ENCODE measurements at regions of chr4 and their contacts with region 1.

Region 1: DNA sequence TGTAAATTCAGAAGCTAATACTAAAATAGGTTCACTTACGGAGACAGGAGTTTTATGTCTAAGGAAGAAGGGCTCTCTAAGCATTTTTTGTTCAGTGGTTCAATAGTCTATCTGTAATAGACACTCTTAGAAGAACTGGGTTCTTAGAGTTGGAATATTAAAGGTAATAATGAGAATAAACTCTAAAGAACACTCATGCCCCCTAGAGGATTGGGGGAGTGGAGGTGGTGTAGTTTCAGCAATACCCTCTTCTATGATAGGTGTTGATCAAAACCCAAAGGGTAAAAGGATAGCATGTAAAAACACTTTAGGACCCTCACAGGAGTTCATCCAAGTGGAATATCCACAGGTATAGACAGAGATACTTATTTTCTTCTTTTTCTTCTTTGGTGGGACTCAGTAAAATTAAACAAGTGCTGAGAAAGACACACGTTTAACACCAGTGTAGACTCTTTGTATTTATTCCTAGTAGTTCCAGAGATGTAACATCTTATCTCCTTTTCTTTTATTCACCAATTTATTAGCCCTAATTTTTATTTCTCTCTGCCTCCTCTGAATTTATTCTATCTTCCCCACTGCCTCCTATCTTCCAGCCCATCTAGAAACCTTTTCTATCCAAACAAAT is 25.7 kb upstream of the MND1 start:
- DNase-seq: peak; percentile 29
- H3K4me3 Mint-ChIP-seq: no peak overlapping the region
- H3K27ac Mint-ChIP-seq: peak overlapping the region; percentile 58
- H3K4me1 Mint-ChIP-seq: no peaks in the 10 kb centered on the region
- H3K27me3 Mint-ChIP-seq: no peaks in the 10 kb centered on the region
- CTCF ChIP-seq: peak; percentile 25

Region 2: DNA sequence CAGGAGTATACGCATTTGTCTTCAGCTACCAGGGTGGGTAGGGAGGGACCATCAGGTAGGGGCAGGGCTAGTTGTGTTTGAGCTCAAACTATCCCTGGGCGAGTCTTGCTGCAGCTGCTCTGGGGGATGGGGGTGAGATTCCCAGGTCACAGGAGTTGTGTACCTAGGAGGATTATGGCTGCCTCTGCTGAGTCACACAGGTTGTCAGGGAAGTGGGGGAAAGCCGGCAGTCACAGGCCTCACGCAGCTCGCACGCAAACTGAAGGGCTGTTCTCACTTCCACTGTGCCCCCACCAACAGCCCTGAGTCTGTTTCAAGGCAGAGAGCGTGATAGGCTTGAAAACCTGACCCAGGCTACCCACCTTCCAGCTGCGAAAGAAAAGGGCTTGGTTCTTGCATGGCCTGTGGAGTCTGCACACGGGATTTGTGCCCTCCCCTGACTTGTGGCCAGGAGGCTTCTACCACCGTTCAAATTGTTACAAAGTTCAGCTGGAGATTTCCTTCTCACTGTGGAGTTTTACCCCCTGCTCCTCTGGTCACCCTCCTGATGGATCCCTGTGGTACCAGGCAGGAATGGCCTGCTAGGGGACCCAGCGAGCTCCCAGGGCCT is 475.2 kb before region 1 on chr4:
- CTCF ChIA-PET with region 1: no interaction called
- intact Hi-C with region 1: loop called (anchors 10 kb)
- DNase-seq: peak; percentile 65
- H3K4me3 Mint-ChIP-seq: peak overlapping the region; percentile 34
- H3K27ac Mint-ChIP-seq: peak overlapping the region; percentile 70
- H3K4me1 Mint-ChIP-seq: peaks cover 25% of the 10 kb centered on the region
- H3K27me3 Mint-ChIP-seq: no peaks in the 10 kb centered on the region
- CTCF ChIP-seq: no peak

Region 3: DNA sequence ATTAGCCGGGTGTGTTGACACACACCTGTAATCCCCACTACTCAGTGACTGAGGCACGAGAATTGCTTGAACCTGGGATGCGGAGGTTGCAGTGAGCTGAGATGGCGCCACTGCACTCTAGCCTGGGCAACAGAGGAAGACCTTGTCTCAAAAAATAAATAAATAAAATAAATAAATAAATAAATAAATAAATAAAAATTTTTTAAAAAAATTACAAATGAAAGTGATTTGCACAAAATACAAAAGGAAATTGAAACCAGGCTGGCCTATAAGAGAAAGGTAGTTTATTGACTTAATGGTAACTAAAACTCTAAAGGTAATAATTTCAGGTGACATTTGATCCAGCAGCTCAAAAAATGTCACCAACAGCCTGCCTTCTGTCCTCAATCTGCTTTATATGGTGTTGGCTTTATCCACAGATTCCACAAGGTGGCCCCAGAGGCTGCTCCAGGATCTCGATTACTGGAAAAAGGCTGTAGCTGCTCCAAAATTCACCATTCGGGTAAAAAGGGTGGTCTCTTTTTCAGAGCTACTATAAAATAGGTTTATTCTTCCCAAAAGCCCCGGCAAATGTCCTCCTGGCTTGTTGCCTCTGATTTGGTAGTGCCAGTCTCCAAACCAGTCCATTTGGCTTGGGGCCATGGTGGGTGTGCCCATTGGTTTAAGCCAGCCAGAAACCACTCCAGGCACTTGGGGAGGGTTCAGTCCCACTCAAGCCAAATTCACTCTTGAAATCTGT is 175.9 kb before region 1 on chr4:
- CTCF ChIA-PET with region 1: no interaction called
- intact Hi-C with region 1: loop called (anchors 1 kb)
- DNase-seq: peak; percentile 75
- H3K4me3 Mint-ChIP-seq: peak overlapping the region; percentile 58
- H3K27ac Mint-ChIP-seq: peak overlapping the region; percentile 95
- H3K4me1 Mint-ChIP-seq: peaks cover 62% of the 10 kb centered on the region
- H3K27me3 Mint-ChIP-seq: no peaks in the 10 kb centered on the region
- CTCF ChIP-seq: peak; percentile 62

Region 4: DNA sequence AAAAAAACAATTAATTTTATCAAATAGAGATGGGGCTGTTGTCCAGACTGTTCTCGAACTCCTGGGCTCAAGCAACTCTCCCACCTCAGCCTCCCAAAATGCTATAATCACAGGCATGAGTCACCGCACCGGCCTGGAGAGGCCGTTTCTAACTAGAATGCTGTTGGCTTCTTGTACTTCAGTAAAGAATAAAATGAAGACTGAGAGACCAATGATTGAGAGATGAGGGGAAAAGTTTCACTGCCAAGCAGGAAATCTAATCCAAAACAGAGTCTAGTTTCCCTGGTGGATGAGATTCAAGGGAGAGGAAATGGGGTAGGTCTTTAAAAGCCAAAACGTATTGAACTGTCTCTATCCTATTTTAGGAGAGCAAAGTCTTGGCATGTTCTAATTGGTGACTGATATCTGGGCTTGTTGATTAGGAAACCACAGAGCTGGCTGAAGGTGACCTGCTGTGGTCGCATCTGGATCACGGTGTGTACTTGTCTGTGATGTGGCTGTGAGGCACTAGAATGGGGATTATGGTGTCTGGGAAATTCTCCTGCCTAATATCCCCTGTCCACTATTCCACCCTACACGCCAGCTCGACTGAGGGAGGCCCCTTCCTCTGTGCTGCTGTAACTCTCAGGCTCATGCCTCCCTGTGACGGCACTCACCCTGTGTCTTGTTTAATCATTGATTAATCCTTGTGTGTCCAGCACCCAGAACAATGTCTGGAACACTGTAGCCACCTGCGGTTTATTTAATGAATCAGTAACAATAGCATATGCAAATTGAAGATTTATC is 129.6 kb before region 1 on chr4:
- CTCF ChIA-PET with region 1: no interaction called
- intact Hi-C with region 1: no loop called
- DNase-seq: peak; percentile 33
- H3K4me3 Mint-ChIP-seq: peak overlapping the region; percentile 57
- H3K27ac Mint-ChIP-seq: peak overlapping the region; percentile 92
- H3K4me1 Mint-ChIP-seq: peaks cover 18% of the 10 kb centered on the region
- H3K27me3 Mint-ChIP-seq: no peaks in the 10 kb centered on the region
- CTCF ChIP-seq: no peak

Region 5: GRCh38 chr4:153204247-153205027 is 114.4 kb before region 1 on chr4 and contains the start of gene TRIM2:
- CTCF ChIA-PET with region 1: interaction called, 3 read pairs
- intact Hi-C with region 1: loop called (anchors 2 kb)
- DNase-seq: peak; percentile 81
- H3K4me3 Mint-ChIP-seq: peak within 1 kb of the TSS; percentile 86
- H3K27ac Mint-ChIP-seq: peak within 1 kb of the TSS; percentile 92
- H3K4me1 Mint-ChIP-seq: peaks cover 22% of the 10 kb centered on the region
- H3K27me3 Mint-ChIP-seq: no peaks in the 10 kb centered on the region
- CTCF ChIP-seq: no peak
- total RNA-seq, gene TRIM2: 35.5 and 49.6 TPM in 2 replicates

Region 6: DNA sequence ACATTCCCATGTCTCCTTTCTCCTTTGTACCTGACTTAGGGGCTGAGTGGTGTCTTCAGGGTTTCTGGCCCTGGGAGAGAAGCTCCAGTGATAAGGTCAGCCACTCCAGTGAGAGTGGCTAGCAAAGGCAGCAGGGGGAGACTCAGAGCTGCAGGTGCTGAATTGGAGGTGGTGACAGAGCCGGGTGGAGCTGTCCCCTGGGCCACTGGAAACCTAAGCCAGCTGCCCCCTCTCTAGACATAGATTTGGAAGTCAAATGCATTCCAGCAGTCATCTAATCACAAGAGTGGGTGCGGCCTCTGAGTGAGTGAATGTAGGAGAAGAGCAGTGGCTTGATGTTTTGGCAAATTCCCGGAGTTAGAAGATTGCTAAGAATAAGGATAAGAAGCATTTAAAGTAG is 86.0 kb before region 1 on chr4:
- CTCF ChIA-PET with region 1: no interaction called
- intact Hi-C with region 1: loop called (anchors 1 kb)
- DNase-seq: peak; percentile 50
- H3K4me3 Mint-ChIP-seq: peak overlapping the region; percentile 27
- H3K27ac Mint-ChIP-seq: peak overlapping the region; percentile 57
- H3K4me1 Mint-ChIP-seq: peaks cover 37% of the 10 kb centered on the region
- H3K27me3 Mint-ChIP-seq: no peaks in the 10 kb centered on the region
- CTCF ChIP-seq: no peak